Naive thymus-derived CD4-positive, alpha-beta T cell (primary cell): ENCODE measurements at regions of chr1 and their contacts with region 1.

Region 1: GRCh38 chr1:197775282-197776262 is at the start of gene DENND1B:
- DNase-seq: peak; percentile 64 to 83 (median 81)
- ATAC-seq: peak; percentile 80
- H3K4me3 ChIP-seq: peak within 1 kb of the TSS; percentile 68
- H3K4me3 Mint-ChIP-seq: peak within 1 kb of the TSS; percentile 87 to 98 (median 92)
- H3K27ac ChIP-seq: peak within 1 kb of the TSS; percentile 74
- H3K27ac Mint-ChIP-seq: peak within 1 kb of the TSS; percentile 90 to 98 (median 97)
- H3K4me1 ChIP-seq: peaks cover 19 to 34% of the 10 kb centered on the region in 2 donors
- H3K4me1 Mint-ChIP-seq: peaks cover 32 to 72% (median 62%) of the 10 kb centered on the region in 7 donors
- H3K27me3 ChIP-seq: no peaks in the 10 kb centered on the region
- H3K27me3 Mint-ChIP-seq: no peaks in the 10 kb centered on the region
- total RNA-seq, gene DENND1B: 14.2 to 28.7 (median 23.2) TPM

Region 2: DNA sequence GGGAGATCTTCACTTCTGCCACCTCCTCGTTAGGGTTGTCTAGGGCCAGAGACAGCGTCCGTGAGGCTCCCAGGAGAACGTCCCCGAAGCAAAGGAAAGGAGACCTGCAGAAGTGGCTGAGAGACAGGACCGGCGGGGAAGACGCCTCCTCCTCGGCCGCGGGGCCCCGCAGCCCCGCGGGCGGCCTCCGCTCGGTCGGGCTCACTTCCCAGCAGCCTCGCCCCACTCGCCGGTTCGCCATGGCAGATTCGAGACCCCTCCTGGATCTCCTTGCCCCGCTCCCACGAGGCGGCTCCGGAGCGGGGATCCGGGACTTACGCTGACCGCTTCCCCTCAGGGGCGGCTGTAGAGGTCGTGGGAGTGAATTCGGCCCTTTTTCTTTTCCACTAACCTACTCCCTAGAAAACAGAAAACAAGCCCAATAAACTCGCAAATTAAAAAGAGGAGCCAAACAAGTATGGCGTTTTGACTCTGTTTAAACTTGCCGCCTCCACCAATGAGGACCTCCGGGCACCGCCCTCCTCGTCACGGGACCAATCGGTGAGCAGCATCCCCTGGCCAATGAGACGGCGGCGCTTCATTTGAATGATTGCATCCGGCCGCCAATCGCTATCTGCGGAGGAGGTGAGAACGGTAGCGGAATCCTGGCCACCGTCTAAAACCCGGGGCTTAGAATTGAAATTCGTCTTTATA is 629.2 kb before region 1 on chr1 and contains the start of gene ASPM:
- CTCF ChIA-PET with region 1: no interaction called
- POLR2A ChIA-PET with region 1: no interaction called
- intact Hi-C with region 1: loop called (anchors 1 to 10 kb)
- DNase-seq: peak; percentile 87 to 95 (median 93)
- ATAC-seq: peak; percentile 99
- H3K4me3 ChIP-seq: peak within 1 kb of the TSS; percentile 71
- H3K4me3 Mint-ChIP-seq: peak within 1 kb of the TSS; percentile 89 to 98 (median 92)
- H3K27ac ChIP-seq: peak within 1 kb of the TSS; percentile 74
- H3K27ac Mint-ChIP-seq: peak within 1 kb of the TSS; percentile 76 to 96 (median 94)
- H3K4me1 ChIP-seq: peaks cover 0 to 6% of the 10 kb centered on the region in 2 donors
- H3K4me1 Mint-ChIP-seq: peaks cover 7 to 23% (median 11%) of the 10 kb centered on the region in 7 donors
- H3K27me3 ChIP-seq: no peaks in the 10 kb centered on the region
- H3K27me3 Mint-ChIP-seq: peaks cover 0 to 11% (median 4%) of the 10 kb centered on the region in 5 donors
- total RNA-seq, gene ASPM: 0.08 to 48.8 (median 0.24) TPM

Region 3: GRCh38 chr1:197285526-197286205 is 489.9 kb before region 1 on chr1:
- CTCF ChIA-PET with region 1: no interaction called
- POLR2A ChIA-PET with region 1: no interaction called
- intact Hi-C with region 1: no loop called
- DNase-seq: no peak
- ATAC-seq: no peak
- H3K4me3 ChIP-seq: no peak overlapping the region
- H3K4me3 Mint-ChIP-seq: no peak overlapping the region
- H3K27ac ChIP-seq: no peak overlapping the region
- H3K27ac Mint-ChIP-seq: no peak overlapping the region
- H3K4me1 ChIP-seq: no peaks in the 10 kb centered on the region
- H3K4me1 Mint-ChIP-seq: peaks cover 0 to 8% (median 0%) of the 10 kb centered on the region in 7 donors
- H3K27me3 ChIP-seq: no peaks in the 10 kb centered on the region
- H3K27me3 Mint-ChIP-seq: peaks cover 12 to 26% (median 13%) of the 10 kb centered on the region in 5 donors

Region 4: GRCh38 chr1:197692965-197693364 is 82.6 kb before region 1 on chr1:
- CTCF ChIA-PET with region 1: no interaction called
- POLR2A ChIA-PET with region 1: interaction called, 3 read pairs
- intact Hi-C with region 1: loop called in 1 of 2 experiments (anchors 5 kb)
- DNase-seq: no peak
- ATAC-seq: no peak
- H3K4me3 ChIP-seq: no peak overlapping the region
- H3K4me3 Mint-ChIP-seq: no peak overlapping the region
- H3K27ac ChIP-seq: no peak overlapping the region
- H3K27ac Mint-ChIP-seq: no peak overlapping the region
- H3K4me1 ChIP-seq: peaks cover 0 to 9% of the 10 kb centered on the region in 2 donors
- H3K4me1 Mint-ChIP-seq: peaks cover 0 to 47% (median 33%) of the 10 kb centered on the region in 7 donors
- H3K27me3 ChIP-seq: no peaks in the 10 kb centered on the region
- H3K27me3 Mint-ChIP-seq: no peaks in the 10 kb centered on the region

Region 5: DNA sequence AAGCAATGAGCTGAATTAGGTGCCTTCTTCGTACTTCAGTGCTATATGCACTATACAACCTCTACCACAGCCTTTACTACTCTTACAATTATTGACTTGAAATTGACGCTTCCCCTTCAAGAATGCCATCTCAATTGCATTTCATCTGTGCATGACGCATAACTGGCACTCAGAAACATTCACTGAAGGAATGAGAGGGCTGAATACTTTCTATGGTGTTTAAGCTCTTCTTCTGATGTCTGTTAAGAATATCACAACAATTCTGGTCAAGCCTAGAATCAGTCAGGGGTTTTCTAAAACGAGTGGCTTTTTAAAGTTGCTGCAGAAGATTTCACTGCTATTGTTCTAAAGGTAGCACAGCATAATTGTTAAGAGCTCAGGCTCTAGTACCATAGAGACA is 11.8 kb before region 1 on chr1:
- CTCF ChIA-PET with region 1: interaction called, 6 read pairs
- POLR2A ChIA-PET with region 1: interaction called, 4 read pairs
- intact Hi-C with region 1: loop called in 1 of 2 experiments (anchors 1 kb)
- DNase-seq: no peak
- ATAC-seq: no peak
- H3K4me3 ChIP-seq: no peak overlapping the region
- H3K4me3 Mint-ChIP-seq: peak overlapping the region in 1 of 10 donors; percentile 53
- H3K27ac ChIP-seq: no peak overlapping the region
- H3K27ac Mint-ChIP-seq: peak overlapping the region in 3 of 9 donors; percentile 4 to 19 (median 11)
- H3K4me1 ChIP-seq: peaks cover 7 to 12% of the 10 kb centered on the region in 2 donors
- H3K4me1 Mint-ChIP-seq: peaks cover 32 to 80% (median 60%) of the 10 kb centered on the region in 7 donors
- H3K27me3 ChIP-seq: no peaks in the 10 kb centered on the region
- H3K27me3 Mint-ChIP-seq: no peaks in the 10 kb centered on the region

Region 6: DNA sequence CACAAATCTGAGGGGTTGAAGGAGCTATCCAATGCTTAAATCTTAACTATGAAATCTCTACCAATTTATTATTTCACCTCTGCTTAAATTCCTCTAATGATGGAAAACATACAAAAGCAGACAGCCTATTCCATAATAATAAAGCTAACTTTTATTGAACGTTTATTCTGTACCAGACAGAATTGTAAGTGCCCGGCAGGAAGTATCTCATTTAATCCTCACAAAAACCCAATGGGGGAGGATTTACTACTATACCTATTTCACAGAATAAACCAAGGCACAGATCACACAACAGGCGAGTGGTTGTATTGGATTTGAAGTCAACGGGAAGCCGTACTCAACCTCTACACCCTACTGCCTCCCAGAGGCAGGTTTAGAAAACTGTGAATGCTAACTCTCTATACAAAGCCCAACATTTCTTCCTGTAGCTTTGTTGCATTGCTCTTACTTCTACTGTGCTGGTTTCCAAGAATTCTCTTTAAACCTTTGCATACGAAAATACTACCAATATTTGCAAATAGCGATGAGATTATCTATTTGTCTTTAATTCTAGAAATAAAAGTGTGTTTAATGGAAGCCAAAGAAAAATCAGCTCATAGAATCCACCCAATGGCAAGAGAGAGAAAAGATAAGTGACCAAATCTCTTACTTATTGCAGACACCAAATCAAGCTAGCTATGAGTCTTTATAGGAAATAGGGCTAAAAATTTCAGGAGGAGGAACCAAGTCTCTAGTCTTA is 93.3 kb after region 1 on chr1:
- CTCF ChIA-PET with region 1: interaction called, 3 read pairs
- POLR2A ChIA-PET with region 1: no interaction called
- intact Hi-C with region 1: loop called in 1 of 2 experiments (anchors 5 kb)
- DNase-seq: peak in 7 of 9 donors; percentile 17 to 62 (median 41)
- ATAC-seq: peak; percentile 86
- H3K4me3 ChIP-seq: no peak overlapping the region
- H3K4me3 Mint-ChIP-seq: no peak overlapping the region
- H3K27ac ChIP-seq: no peak overlapping the region
- H3K27ac Mint-ChIP-seq: no peak overlapping the region
- H3K4me1 ChIP-seq: no peaks in the 10 kb centered on the region
- H3K4me1 Mint-ChIP-seq: peaks cover 0 to 2% (median 0%) of the 10 kb centered on the region in 7 donors
- H3K27me3 ChIP-seq: no peaks in the 10 kb centered on the region
- H3K27me3 Mint-ChIP-seq: peaks cover 0 to 27% (median 0%) of the 10 kb centered on the region in 5 donors

Region 7: DNA sequence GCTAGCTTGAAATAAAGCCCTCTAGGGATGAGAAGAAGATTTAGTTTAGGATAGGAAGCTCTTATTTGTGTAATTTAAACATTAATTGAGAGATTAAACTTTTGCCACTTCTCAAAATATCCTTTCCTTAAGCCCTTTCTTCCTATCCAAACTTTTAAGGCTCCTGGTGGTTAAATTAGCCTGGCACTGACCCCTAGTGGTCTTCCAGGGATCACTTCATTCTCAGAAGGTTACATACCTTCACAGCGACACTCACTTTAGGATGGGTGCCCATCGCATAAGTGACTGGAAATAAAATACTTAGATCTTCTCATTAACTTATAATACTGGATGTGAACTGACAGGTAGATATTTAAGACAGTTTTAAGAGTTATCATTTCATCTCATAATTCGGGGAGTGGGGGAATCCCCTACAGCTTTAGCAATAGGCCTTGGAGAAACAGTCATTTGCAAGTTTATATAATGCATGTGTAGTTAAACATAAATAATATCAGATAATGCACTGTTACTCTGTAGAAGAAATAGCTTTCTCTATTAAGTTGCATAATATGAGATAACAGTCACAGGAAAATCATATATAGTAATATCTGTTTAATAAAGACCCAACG is 149.0 kb after region 1 on chr1:
- CTCF ChIA-PET with region 1: no interaction called
- POLR2A ChIA-PET with region 1: no interaction called
- intact Hi-C with region 1: loop called in 1 of 2 experiments (anchors 5 kb)
- DNase-seq: peak in 1 of 9 donors; percentile 40
- ATAC-seq: peak; percentile 73
- H3K4me3 ChIP-seq: no peak overlapping the region
- H3K4me3 Mint-ChIP-seq: no peak overlapping the region
- H3K27ac ChIP-seq: no peak overlapping the region
- H3K27ac Mint-ChIP-seq: no peak overlapping the region
- H3K4me1 ChIP-seq: peaks cover 5% of the 10 kb centered on the region in 2 donors
- H3K4me1 Mint-ChIP-seq: peaks cover 17 to 29% (median 23%) of the 10 kb centered on the region in 7 donors
- H3K27me3 ChIP-seq: peaks cover 17 to 32% of the 10 kb centered on the region in 2 donors
- H3K27me3 Mint-ChIP-seq: peaks cover 74 to 95% (median 76%) of the 10 kb centered on the region in 5 donors

Region 8: DNA sequence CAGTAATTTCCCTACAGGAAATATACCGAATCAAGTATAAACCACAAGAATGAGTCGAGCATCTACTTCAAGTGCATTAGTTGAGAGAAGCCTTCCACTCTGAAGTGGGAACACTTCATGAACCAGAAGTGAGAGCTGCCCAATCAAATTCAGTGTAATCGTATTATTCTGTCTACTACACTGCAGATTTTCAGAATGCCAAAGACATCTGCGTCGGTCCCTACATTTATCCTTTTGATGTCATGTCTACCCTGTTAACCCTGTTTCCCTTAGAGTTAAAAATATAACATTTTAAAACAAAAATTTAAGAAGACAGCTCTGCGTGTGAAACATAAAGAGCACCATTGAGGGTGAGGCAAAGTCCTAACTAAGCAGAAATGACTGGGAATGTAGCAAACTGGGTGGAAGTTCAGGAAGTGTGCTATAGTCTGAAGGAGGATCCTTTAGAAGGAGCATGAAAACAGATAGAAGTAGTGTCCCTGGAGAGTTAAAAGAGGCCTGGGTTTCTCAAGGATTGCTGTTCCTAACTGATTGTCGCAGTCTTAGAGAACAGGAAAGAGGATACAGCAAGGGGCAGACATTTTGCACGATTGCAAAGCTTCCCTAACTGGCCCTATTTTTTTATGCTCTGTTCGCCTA is 1154.5 kb after region 1 on chr1:
- CTCF ChIA-PET with region 1: no interaction called
- POLR2A ChIA-PET with region 1: no interaction called
- intact Hi-C with region 1: loop called (anchors 5 to 10 kb)
- DNase-seq: peak in 7 of 9 donors; percentile 35 to 67 (median 55)
- ATAC-seq: peak; percentile 88
- H3K4me3 ChIP-seq: peak overlapping the region; percentile 48
- H3K4me3 Mint-ChIP-seq: peak overlapping the region; percentile 68 to 92 (median 84)
- H3K27ac ChIP-seq: peak overlapping the region; percentile 54
- H3K27ac Mint-ChIP-seq: peak overlapping the region; percentile 72 to 94 (median 88)
- H3K4me1 ChIP-seq: peaks cover 15 to 34% of the 10 kb centered on the region in 2 donors
- H3K4me1 Mint-ChIP-seq: peaks cover 18 to 65% (median 49%) of the 10 kb centered on the region in 7 donors
- H3K27me3 ChIP-seq: no peaks in the 10 kb centered on the region
- H3K27me3 Mint-ChIP-seq: no peaks in the 10 kb centered on the region